ENCODE measurements at regions of chr5 and their contacts with region 1.

Region 1: GRCh38 chr5:68261569-68262065 is 46.1 kb downstream of the PIK3R1 start:
- DNase-seq: no peak
- ATAC-seq: no peak
- H3K4me3 ChIP-seq: no peak overlapping the region
- H3K4me3 Mint-ChIP-seq: no peak overlapping the region
- H3K27ac ChIP-seq: peak overlapping the region; percentile 28
- H3K27ac Mint-ChIP-seq: peak overlapping the region; percentile 69 to 81
- H3K4me1 ChIP-seq: peaks cover 33 to 50% of the 10 kb centered on the region in 2 experiments
- H3K4me1 Mint-ChIP-seq: peaks cover 82 to 90% (median 87%) of the 10 kb centered on the region in 3 donors
- H3K27me3 ChIP-seq: no peaks in the 10 kb centered on the region
- H3K27me3 Mint-ChIP-seq: no peaks in the 10 kb centered on the region

Region 2: GRCh38 chr5:68187268-68188055 is 74.2 kb before region 1 on chr5:
- CTCF ChIA-PET with region 1: no interaction called
- POLR2A ChIA-PET with region 1: no interaction called
- DNase-seq: no peak
- ATAC-seq: no peak
- H3K4me3 ChIP-seq: no peak overlapping the region
- H3K4me3 Mint-ChIP-seq: no peak overlapping the region
- H3K27ac ChIP-seq: no peak overlapping the region
- H3K27ac Mint-ChIP-seq: no peak overlapping the region
- H3K4me1 ChIP-seq: no peaks in the 10 kb centered on the region
- H3K4me1 Mint-ChIP-seq: no peaks in the 10 kb centered on the region
- H3K27me3 ChIP-seq: no peaks in the 10 kb centered on the region
- H3K27me3 Mint-ChIP-seq: peaks cover 0 to 3% of the 10 kb centered on the region in 2 donors

Region 3: GRCh38 chr5:68200288-68200687 is 61.3 kb before region 1 on chr5:
- CTCF ChIA-PET with region 1: no interaction called
- POLR2A ChIA-PET with region 1: no interaction called
- DNase-seq: no peak
- ATAC-seq: no peak
- H3K4me3 ChIP-seq: no peak overlapping the region
- H3K4me3 Mint-ChIP-seq: no peak overlapping the region
- H3K27ac ChIP-seq: no peak overlapping the region
- H3K27ac Mint-ChIP-seq: no peak overlapping the region
- H3K4me1 ChIP-seq: no peaks in the 10 kb centered on the region
- H3K4me1 Mint-ChIP-seq: no peaks in the 10 kb centered on the region
- H3K27me3 ChIP-seq: no peaks in the 10 kb centered on the region
- H3K27me3 Mint-ChIP-seq: peaks cover 5 to 14% of the 10 kb centered on the region in 2 donors

Region 4: GRCh38 chr5:68272289-68272688 is 10.7 kb after region 1 on chr5:
- CTCF ChIA-PET with region 1: interaction called, 6 to 15 read pairs
- POLR2A ChIA-PET with region 1: interaction called, 3 read pairs
- DNase-seq: peak in 1 of 35 experiments; percentile 51
- ATAC-seq: no peak
- H3K4me3 ChIP-seq: no peak overlapping the region
- H3K4me3 Mint-ChIP-seq: no peak overlapping the region
- H3K27ac ChIP-seq: no peak overlapping the region
- H3K27ac Mint-ChIP-seq: peak overlapping the region; percentile 17 to 98
- H3K4me1 ChIP-seq: peaks cover 26 to 41% of the 10 kb centered on the region in 2 experiments
- H3K4me1 Mint-ChIP-seq: peaks cover 77 to 96% (median 94%) of the 10 kb centered on the region in 3 donors
- H3K27me3 ChIP-seq: no peaks in the 10 kb centered on the region
- H3K27me3 Mint-ChIP-seq: no peaks in the 10 kb centered on the region